H1 (cell line): ENCODE measurements at regions of chr7 and their contacts with region 1.

Region 1: GRCh38 chr7:128830231-128831177 is at the start of gene FLNC:
- DNase-seq: peak in 1 of 2 experiments; percentile 72
- H3K4me3 ChIP-seq: peak within 1 kb of the TSS; percentile 45 to 66 (median 57)
- H3K27ac ChIP-seq: no peak within 1 kb of the TSS
- H3K4me1 ChIP-seq: peaks cover 3 to 53% (median 31%) of the 10 kb centered on the region in 4 experiments
- H3K27me3 ChIP-seq: peaks cover 8 to 27% (median 27%) of the 10 kb centered on the region in 4 experiments; a peak in 6 of 7 replicates
- CTCF ChIP-seq: no peak
- EP300 ChIP-seq: no peak
- POLR2A ChIP-seq: no peak
- RAD21 ChIP-seq: no peak
- total RNA-seq, gene FLNC: 10.7 and 12.0 TPM in 2 replicates

Region 2: DNA sequence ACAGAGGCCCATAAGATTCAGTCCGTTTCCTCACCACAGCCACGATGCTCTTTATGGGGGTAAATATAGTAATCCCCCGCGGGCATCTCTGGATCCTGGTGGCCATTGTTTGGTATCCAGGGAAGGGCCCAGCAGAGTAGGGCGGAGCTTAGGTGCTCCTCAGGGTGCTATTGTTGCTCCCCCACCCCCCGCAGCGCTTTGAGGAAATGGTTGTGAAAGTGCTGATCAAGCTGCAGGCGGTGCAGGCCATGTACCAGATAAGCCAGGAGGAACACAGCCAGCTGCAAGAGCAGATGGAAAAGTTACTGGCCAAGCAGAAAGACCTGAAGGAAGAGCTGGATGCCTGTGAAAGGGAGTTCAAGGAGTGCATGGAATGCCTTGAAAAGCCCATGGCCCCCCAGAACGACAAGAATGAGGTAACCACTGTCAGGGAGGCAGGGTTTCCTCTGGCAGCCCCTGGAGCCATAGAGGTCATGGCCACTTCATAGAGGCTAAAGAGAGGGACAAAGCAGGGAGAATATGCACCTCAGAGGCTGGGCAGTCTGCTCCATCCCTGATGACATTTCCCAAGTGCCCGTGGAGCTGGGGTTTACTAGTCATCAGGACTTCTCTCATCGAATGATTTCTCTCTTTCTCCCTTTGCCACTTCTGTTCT is 17.9 kb before region 1 on chr7:
- CTCF ChIA-PET with region 1: interaction called, 12 read pairs
- POLR2A ChIA-PET with region 1: interaction called, 31 read pairs
- DNase-seq: no peak
- H3K4me3 ChIP-seq: no peak overlapping the region
- H3K27ac ChIP-seq: no peak overlapping the region
- H3K4me1 ChIP-seq: peaks cover 3 to 9% (median 4%) of the 10 kb centered on the region in 4 experiments; a peak in 6 of 7 replicates
- H3K27me3 ChIP-seq: no peaks in the 10 kb centered on the region
- CTCF ChIP-seq: no peak
- EP300 ChIP-seq: no peak
- POLR2A ChIP-seq: no peak
- RAD21 ChIP-seq: no peak

Region 3: DNA sequence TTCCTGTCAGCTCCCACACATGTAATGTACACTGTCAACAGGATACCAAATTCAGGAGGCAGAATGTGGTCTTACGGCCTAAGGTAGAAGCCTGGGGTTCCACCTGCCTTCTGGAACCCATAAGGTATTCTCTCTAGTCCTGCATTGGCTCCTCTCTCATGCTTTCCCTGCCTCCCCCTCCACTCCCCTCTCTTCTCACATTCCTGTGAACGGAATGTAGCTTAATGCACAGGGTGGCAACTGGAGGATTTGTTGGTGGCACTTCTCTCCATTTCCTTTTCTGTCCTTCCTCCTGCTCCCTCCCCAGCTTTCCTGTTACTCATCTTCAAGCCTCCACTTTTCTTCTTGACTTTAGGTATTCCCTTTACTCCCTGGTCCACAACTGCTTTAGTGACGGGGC is 11.8 kb before region 1 on chr7:
- CTCF ChIA-PET with region 1: interaction called, 12 read pairs
- POLR2A ChIA-PET with region 1: interaction called, 31 read pairs
- DNase-seq: no peak
- H3K4me3 ChIP-seq: no peak overlapping the region
- H3K27ac ChIP-seq: no peak overlapping the region
- H3K4me1 ChIP-seq: no peaks in the 10 kb centered on the region
- H3K27me3 ChIP-seq: no peaks in the 10 kb centered on the region
- CTCF ChIP-seq: no peak
- EP300 ChIP-seq: no peak
- POLR2A ChIP-seq: no peak
- RAD21 ChIP-seq: no peak

Region 4: GRCh38 chr7:128841921-128842651 is 11.6 kb after region 1 on chr7:
- CTCF ChIA-PET with region 1: interaction called, 71 read pairs
- POLR2A ChIA-PET with region 1: interaction called, 15 read pairs
- DNase-seq: peak in 1 of 2 experiments; percentile 88
- H3K4me3 ChIP-seq: no peak overlapping the region
- H3K27ac ChIP-seq: no peak overlapping the region
- H3K4me1 ChIP-seq: peaks cover 0 to 10% (median 5%) of the 10 kb centered on the region in 4 experiments; a peak in 6 of 7 replicates
- H3K27me3 ChIP-seq: no peaks in the 10 kb centered on the region; a peak in 1 of 7 replicates
- CTCF ChIP-seq: peak in 2 of 3 experiments; percentile 71 to 74; a peak in 3 of 4 replicates
- EP300 ChIP-seq: no peak; a peak in 1 of 3 replicates
- POLR2A ChIP-seq: no peak
- RAD21 ChIP-seq: peak; percentile 33 to 53; a peak in 3 of 4 replicates

Region 5: GRCh38 chr7:128862571-128863432 is 32.3 kb after region 1 on chr7 and contains the start of gene ATP6V1F:
- CTCF ChIA-PET with region 1: interaction called, 18 read pairs
- POLR2A ChIA-PET with region 1: interaction called, 27 read pairs
- DNase-seq: peak; percentile 97 to 100
- H3K4me3 ChIP-seq: peak within 1 kb of the TSS; percentile 74 to 92 (median 78)
- H3K27ac ChIP-seq: no peak within 1 kb of the TSS
- H3K4me1 ChIP-seq: peaks cover 0 to 12% (median 5%) of the 10 kb centered on the region in 4 experiments; a peak in 5 of 7 replicates
- H3K27me3 ChIP-seq: peaks cover 0 to 2% (median under 1%) of the 10 kb centered on the region in 4 experiments; a peak in 3 of 7 replicates
- CTCF ChIP-seq: no peak
- EP300 ChIP-seq: no peak
- POLR2A ChIP-seq: peak in 1 of 2 experiments; percentile 49; a peak in 2 of 3 replicates
- RAD21 ChIP-seq: no peak
- total RNA-seq, gene ATP6V1F: 104 TPM in 2 replicates

Region 6: GRCh38 chr7:128869138-128869943 is 38.8 kb after region 1 on chr7:
- CTCF ChIA-PET with region 1: interaction called, 9 read pairs
- POLR2A ChIA-PET with region 1: interaction called, 27 read pairs
- DNase-seq: peak in 1 of 2 experiments; percentile 81
- H3K4me3 ChIP-seq: peak overlapping the region; percentile 49 to 73 (median 57)
- H3K27ac ChIP-seq: no peak overlapping the region
- H3K4me1 ChIP-seq: peaks cover 0 to 18% (median 12%) of the 10 kb centered on the region in 4 experiments; a peak in 6 of 7 replicates
- H3K27me3 ChIP-seq: peaks cover 5 to 42% (median 36%) of the 10 kb centered on the region in 4 experiments
- CTCF ChIP-seq: no peak
- EP300 ChIP-seq: no peak
- POLR2A ChIP-seq: no peak
- RAD21 ChIP-seq: no peak